Panc1 (cell line): ENCODE measurements at regions of chr11 and their contacts with region 1.

Region 1: GRCh38 chr11:46410021-46410420 is 18.4 kb upstream of the CHRM4 start:
- DNase-seq: no peak
- ATAC-seq: peak; percentile 36; the same call in 1 of the 2 replicates
- H3K4me3 ChIP-seq: no peak overlapping the region
- H3K27ac ChIP-seq: no peak overlapping the region
- H3K4me1 ChIP-seq: peaks cover 2% of the 10 kb centered on the region; the same call in 1 of the 2 replicates
- H3K27me3 ChIP-seq: no peaks in the 10 kb centered on the region
- CTCF ChIP-seq: no peak; the same call in 1 of the 2 replicates

Region 2: DNA sequence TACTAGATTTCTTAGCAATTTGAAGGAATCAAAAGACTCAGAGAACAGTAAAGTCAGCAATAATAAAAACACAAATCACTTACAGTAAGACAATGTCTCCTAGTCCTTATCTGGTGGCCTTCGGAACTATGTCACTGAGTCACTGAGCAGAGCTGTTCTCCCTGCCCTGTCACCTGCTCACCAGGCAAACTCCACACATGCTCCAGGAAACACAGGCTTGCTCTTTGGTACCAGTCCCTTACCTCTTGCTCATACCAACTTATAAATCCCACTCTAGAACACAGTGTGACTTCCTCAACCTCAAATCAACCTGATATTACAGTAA is 62.6 kb after region 1 on chr11:
- CTCF ChIA-PET with region 1: no interaction called
- POLR2A ChIA-PET with region 1: no interaction called
- in situ Hi-C with region 1: no loop called
- intact Hi-C with region 1: loop called (anchors 10 kb)
- DNase-seq: no peak
- ATAC-seq: 0 out of 2 replicates have a peak, but pooled peaks have one; percentile 12
- H3K4me3 ChIP-seq: no peak overlapping the region
- H3K27ac ChIP-seq: no peak overlapping the region
- H3K4me1 ChIP-seq: no peaks in the 10 kb centered on the region
- H3K27me3 ChIP-seq: no peaks in the 10 kb centered on the region
- CTCF ChIP-seq: no peak